Adrenal gland (tissue), 19 donors: ENCODE measurements at regions of chr12 and their contacts with region 1.

Region 1: GRCh38 chr12:10623131-10623530 is 9.7 kb upstream of the MAGOHB start:
- DNase-seq: no peak
- H3K4me3 ChIP-seq: no peak overlapping the region
- H3K27ac ChIP-seq: no peak overlapping the region
- H3K4me1 ChIP-seq: no peaks in the 10 kb centered on the region
- H3K27me3 ChIP-seq: peaks cover 8% of the 10 kb centered on the region
- CTCF ChIP-seq: no peak
- POLR2A ChIP-seq: no peak

Region 2: DNA sequence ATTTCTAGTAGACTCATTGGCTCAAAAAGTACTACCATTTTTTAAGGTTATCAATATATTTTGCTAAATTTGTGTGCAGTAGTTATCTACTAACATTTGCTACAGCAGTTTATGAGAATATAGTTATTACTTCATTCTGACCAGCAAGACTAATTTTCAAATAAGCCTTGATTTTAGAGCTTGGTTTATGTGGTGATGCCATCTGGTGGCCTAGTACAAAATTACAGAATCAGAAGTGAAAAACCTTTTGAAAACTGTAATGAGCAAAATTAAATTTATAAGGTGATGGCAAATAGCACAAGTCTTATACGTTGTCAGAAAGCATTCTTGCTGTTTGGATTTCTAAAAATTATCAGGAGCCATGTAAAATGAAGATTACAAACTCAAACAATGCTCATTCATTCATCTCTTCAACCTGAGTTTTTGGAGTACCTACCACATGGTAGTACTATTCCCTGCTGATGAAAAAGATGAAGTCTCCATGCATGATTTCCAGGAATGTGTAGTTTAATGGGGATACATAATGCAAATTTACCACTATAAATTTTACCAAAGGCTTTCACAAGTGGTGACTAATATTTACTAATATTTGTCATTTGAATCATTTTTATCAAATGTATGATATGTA is 60.7 kb before region 1 on chr12:
- intact Hi-C with region 1: no loop called
- DNase-seq: peak in 2 of 7 donors; percentile 18 to 24
- H3K4me3 ChIP-seq: no peak overlapping the region
- H3K27ac ChIP-seq: no peak overlapping the region
- H3K4me1 ChIP-seq: no peaks in the 10 kb centered on the region
- H3K27me3 ChIP-seq: peaks cover 5% of the 10 kb centered on the region
- CTCF ChIP-seq: peak; percentile 44 to 83 (median 72)
- POLR2A ChIP-seq: no peak

Region 3: GRCh38 chr12:10749700-10750384 is 126.7 kb after region 1 on chr12:
- intact Hi-C with region 1: loop called in 1 of 2 experiments (anchors 10 kb)
- DNase-seq: peak; percentile 78 to 95 (median 84)
- H3K4me3 ChIP-seq: peak overlapping the region in 2 of 4 donors; percentile 6 to 30
- H3K27ac ChIP-seq: peak overlapping the region in 3 of 5 donors; percentile 41 to 74 (median 46)
- H3K4me1 ChIP-seq: no peaks in the 10 kb centered on the region
- H3K27me3 ChIP-seq: no peaks in the 10 kb centered on the region
- CTCF ChIP-seq: peak; percentile 79 to 99 (median 92)
- POLR2A ChIP-seq: peak in 1 of 2 donors; percentile 5